Calu3 (cell line): ENCODE measurements at regions of chr15 and their contacts with region 1.

Region 1: DNA sequence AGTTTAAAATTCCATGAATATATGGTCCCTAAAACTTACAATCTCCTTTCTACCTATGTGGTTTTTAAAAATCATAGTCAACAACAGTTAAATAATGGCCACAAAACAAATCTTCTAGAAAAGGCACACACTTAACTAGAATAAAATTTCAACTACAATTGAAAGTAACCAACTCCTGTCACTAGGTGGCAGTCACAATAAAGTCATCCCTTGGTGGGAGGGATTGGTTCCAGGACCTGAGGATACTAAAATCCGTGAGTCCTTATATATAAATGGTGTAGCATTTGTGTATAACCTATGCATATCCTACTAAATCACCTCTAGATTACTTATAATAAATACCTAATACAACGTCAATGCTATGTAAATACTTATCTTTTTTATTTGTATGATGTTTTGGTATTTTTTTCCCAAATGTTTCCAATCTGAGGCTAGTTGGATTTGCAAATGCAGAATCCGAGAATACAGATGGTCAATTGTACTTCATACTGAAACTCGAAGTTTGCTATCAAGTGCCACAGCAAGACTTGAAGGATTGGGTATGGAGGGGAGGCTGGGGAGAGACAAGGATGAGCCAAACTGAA is 172.6 kb downstream of the FMN1 start:
- DNase-seq: peak; percentile 2
- H3K4me3 Mint-ChIP-seq: no peak overlapping the region
- H3K27ac Mint-ChIP-seq: no peak overlapping the region
- H3K4me1 Mint-ChIP-seq: peaks cover 6% of the 10 kb centered on the region
- H3K27me3 Mint-ChIP-seq: no peaks in the 10 kb centered on the region
- CTCF ChIP-seq: no peak

Region 2: DNA sequence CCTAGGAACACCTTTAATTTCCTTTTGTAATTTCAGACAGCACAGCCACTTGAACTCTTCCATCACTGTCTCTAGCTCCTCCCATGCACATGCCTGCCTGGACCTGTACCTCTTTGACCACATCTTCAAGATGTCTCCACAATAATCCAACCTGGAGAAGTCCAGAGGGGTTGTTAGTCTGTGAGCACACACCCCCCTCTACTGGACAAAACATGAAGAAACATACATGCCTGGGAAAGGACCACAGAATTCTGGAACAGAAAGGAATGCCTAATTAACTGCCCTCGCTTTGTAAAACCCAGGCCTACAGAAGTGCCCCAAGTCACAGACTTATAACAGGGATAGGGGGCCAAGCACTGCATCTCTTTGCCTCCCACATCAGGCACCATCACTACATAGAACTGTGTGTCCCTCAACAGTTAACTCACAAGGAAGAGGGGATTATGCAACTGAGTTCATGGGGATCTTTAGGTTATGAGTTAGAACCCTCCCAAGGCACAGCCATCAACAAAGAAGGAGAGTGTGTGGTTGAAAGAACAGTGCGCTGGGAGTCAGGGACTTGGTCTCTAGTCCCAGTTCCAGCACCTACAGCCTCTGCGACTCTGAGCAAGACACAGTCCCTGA is 110.9 kb after region 1 on chr15:
- CTCF ChIA-PET with region 1: no interaction called
- intact Hi-C with region 1: loop called (anchors 2 kb)
- DNase-seq: peak; percentile 7
- H3K4me3 Mint-ChIP-seq: no peak overlapping the region
- H3K27ac Mint-ChIP-seq: no peak overlapping the region
- H3K4me1 Mint-ChIP-seq: no peaks in the 10 kb centered on the region
- H3K27me3 Mint-ChIP-seq: no peaks in the 10 kb centered on the region
- CTCF ChIP-seq: peak; percentile 22

Region 3: DNA sequence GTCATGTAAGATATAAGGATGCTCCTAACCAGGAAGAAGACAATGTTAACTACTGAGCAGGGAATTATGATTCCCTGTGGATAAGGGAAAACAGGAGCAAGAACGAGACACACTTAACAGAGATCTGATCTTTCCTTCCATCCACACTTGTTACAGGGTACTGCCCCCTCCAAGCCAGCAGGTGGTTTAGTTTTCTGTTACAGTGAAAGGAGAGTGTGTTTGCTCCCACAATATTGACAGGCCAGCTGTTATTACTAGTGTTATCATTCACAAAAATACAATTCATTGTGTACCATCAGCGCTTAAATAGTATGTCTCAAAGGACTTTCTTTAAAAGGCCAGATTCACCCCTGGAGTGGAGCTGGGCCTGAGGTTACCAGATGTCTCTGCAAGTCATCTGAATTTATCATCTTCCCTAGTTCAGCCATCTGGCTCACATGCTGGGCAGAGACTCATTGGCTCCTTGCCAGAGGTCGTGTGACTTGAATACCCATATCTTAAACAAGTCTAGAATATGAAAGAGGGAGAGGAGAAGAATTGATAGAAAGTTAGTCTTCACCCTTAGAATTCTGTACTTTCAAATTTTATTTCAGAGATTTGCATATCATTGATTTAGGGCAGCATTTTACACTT is 189.4 kb after region 1 on chr15:
- CTCF ChIA-PET with region 1: no interaction called
- intact Hi-C with region 1: no loop called
- DNase-seq: no peak
- H3K4me3 Mint-ChIP-seq: no peak overlapping the region
- H3K27ac Mint-ChIP-seq: no peak overlapping the region
- H3K4me1 Mint-ChIP-seq: no peaks in the 10 kb centered on the region
- H3K27me3 Mint-ChIP-seq: no peaks in the 10 kb centered on the region
- CTCF ChIP-seq: no peak

Region 4: DNA sequence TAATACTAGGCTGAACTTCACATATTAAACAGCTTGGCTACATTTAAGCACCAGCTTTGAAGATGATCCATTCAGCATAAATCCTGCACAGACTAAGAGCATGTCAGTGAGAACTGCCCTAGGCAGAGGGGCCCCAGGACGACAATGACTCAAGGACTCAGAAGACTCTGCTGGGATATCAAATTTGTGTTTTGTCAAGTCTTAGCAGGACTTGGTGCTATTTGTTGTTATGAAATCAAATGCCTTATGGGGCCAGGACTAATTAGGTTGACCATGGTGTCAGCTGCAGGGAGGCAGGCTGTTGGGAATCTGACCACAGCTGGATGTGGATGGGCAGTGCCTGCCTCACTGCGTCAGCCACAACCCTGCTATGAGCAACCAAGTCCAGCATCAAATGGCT is 380.7 kb after region 1 on chr15:
- CTCF ChIA-PET with region 1: no interaction called
- intact Hi-C with region 1: no loop called
- DNase-seq: no peak
- H3K4me3 Mint-ChIP-seq: no peak overlapping the region
- H3K27ac Mint-ChIP-seq: no peak overlapping the region
- H3K4me1 Mint-ChIP-seq: no peaks in the 10 kb centered on the region
- H3K27me3 Mint-ChIP-seq: peaks cover 11% of the 10 kb centered on the region
- CTCF ChIP-seq: no peak